Panc1 (cell line): ENCODE measurements at regions of chr1 and their contacts with region 1.

Region 1: DNA sequence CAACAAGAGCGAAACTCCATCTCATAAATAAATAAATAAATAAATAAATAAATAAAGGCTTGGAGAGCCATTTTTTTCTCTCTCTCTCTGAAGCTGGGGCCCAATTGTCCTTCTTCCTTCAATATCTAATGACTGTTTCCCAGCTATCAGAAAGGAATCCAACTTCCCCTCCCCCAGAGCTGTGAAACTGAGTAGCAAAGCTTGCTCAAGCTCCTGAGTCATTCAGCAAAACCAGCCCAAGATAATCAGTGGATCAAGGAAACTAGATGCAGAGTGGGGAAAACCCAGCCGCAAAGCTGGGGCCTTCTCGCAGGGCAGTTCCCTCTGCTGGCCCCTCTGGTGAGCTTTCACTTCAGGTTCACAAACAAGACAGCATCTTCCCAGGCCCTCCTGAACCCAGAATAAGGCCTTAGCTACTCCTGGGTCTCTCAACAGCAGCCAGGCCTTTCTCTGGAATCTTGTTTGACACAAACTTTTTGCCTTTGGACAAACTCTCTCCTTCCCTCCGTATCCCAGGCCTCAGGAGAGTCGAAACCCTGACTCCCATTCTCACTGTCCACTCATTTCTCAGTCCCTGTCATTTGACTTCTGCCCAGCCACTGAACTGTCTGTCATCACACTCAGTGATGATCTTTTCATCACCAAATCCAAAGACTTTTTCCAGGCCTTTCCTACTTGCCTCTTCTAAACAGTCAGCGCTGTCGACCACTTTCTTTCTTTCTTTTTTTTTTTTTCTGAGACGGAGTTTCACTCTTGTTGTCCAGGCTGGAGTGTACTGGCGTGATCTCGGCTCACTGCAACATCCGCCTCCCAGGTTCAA is 18.0 kb upstream of the PTP4A2 start:
- DNase-seq: no peak
- ATAC-seq: peak; percentile 87
- H3K4me3 ChIP-seq: peak overlapping the region in 1 of 2 experiments; percentile 20; a peak in 1 of 4 replicates
- H3K27ac ChIP-seq: peak overlapping the region; percentile 93
- H3K4me1 ChIP-seq: peaks cover 46% of the 10 kb centered on the region
- H3K27me3 ChIP-seq: no peaks in the 10 kb centered on the region
- CTCF ChIP-seq: no peak

Region 2: GRCh38 chr1:31944205-31945089 is 11.7 kb before region 1 on chr1:
- CTCF ChIA-PET with region 1: interaction called, 4 read pairs
- POLR2A ChIA-PET with region 1: interaction called, 10 read pairs
- in situ Hi-C with region 1: no loop called
- intact Hi-C with region 1: no loop called
- DNase-seq: no peak
- ATAC-seq: peak; percentile 90
- H3K4me3 ChIP-seq: peak overlapping the region; percentile 47 to 48
- H3K27ac ChIP-seq: peak overlapping the region; percentile 100
- H3K4me1 ChIP-seq: peaks cover 41% of the 10 kb centered on the region
- H3K27me3 ChIP-seq: no peaks in the 10 kb centered on the region
- CTCF ChIP-seq: no peak